Activated CD8-positive, alpha-beta memory T cell treated with anti-CD3 and anti-CD28 coated beads, Interleukin-2, amount 10 ng/mL, durations not matched to agents 7 days and 5 days (primary cell): ENCODE measurements at regions of chr1 and their contacts with region 1.

Region 1: GRCh38 chr1:10430216-10431069 is at the start of gene CENPS:
- DNase-seq: peak; percentile 94
- ATAC-seq: peak; percentile 89
- H3K4me3 Mint-ChIP-seq: peak within 1 kb of the TSS; percentile 87
- H3K27ac Mint-ChIP-seq: peak within 1 kb of the TSS; percentile 93
- H3K4me1 Mint-ChIP-seq: peaks cover 37% of the 10 kb centered on the region
- H3K27me3 Mint-ChIP-seq: no peaks in the 10 kb centered on the region
- total RNA-seq, gene CENPS: 14.8 to 18.6 TPM

Region 2: DNA sequence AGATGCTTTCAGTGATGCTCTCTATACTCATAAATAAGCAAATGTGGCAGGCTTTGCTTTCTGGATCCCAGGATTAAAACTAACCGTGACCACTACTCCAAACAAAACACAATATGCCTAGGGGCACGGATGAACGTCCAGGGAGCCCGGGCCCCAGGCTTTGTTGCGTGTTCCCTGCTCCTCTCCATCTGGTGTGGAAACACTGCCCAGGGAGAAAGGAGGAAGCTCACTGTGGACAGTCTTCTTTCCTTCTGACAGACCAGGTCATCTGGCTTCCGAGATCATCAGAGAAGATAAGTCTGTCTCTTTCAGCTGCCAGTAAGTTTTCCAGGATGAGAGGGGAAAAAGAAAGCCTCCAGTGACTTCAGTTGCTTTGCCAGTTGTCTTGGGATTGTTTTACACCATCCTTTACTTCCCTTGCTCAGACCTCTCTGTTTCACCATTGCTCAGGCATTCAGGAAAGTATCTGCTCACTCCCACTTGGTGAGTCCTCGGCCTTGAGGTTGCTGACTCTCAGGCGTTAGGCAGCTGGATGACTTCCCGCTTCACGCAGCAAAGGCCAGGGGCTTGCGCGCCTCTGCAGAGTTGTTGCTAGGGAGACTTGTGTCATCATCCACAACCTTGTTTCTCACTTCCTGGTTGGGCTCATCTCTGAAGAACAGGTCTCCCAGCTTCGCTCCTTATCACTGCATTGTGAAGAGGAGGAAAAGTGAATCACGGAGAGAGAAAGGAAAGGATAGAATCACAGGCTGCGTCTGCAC is 52.2 kb before region 1 on chr1:
- CTCF ChIA-PET with region 1: interaction called, 23 read pairs
- DNase-seq: no peak
- ATAC-seq: no peak
- H3K4me3 Mint-ChIP-seq: no peak overlapping the region
- H3K27ac Mint-ChIP-seq: no peak overlapping the region
- H3K4me1 Mint-ChIP-seq: no peaks in the 10 kb centered on the region
- H3K27me3 Mint-ChIP-seq: no peaks in the 10 kb centered on the region

Region 3: GRCh38 chr1:10398734-10399623 is 31.5 kb before region 1 on chr1 and contains the start of gene PGD:
- CTCF ChIA-PET with region 1: interaction called, 20 read pairs
- DNase-seq: peak; percentile 99
- ATAC-seq: peak; percentile 98
- H3K4me3 Mint-ChIP-seq: peak within 1 kb of the TSS; percentile 84
- H3K27ac Mint-ChIP-seq: peak within 1 kb of the TSS; percentile 78
- H3K4me1 Mint-ChIP-seq: peaks cover 31% of the 10 kb centered on the region
- H3K27me3 Mint-ChIP-seq: no peaks in the 10 kb centered on the region
- total RNA-seq, gene PGD: 74.9 to 128 TPM

Region 4: DNA sequence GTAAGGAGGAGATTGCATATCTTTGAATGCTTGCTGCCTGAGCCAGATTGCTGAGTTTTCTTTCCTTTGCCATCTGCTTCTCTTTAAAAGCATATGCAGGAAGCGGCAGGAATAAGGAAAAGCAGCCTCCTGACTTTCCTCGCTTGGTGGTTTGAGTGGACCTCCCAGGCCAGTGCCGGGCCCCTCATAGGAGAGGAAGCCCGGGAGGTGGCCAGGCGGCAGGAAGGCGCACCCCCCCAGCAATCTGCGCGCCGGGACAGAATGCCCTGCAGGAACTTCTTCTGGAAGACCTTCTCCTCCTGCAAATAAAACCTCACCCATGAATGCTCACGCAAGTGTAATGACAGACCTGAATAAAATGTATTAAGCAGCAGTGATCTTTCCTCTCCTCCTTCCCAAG is 20.8 kb after region 1 on chr1:
- CTCF ChIA-PET with region 1: interaction called, 15 read pairs
- DNase-seq: no peak
- ATAC-seq: no peak
- H3K4me3 Mint-ChIP-seq: no peak overlapping the region
- H3K27ac Mint-ChIP-seq: no peak overlapping the region
- H3K4me1 Mint-ChIP-seq: peaks cover 2% of the 10 kb centered on the region
- H3K27me3 Mint-ChIP-seq: no peaks in the 10 kb centered on the region

Region 5: DNA sequence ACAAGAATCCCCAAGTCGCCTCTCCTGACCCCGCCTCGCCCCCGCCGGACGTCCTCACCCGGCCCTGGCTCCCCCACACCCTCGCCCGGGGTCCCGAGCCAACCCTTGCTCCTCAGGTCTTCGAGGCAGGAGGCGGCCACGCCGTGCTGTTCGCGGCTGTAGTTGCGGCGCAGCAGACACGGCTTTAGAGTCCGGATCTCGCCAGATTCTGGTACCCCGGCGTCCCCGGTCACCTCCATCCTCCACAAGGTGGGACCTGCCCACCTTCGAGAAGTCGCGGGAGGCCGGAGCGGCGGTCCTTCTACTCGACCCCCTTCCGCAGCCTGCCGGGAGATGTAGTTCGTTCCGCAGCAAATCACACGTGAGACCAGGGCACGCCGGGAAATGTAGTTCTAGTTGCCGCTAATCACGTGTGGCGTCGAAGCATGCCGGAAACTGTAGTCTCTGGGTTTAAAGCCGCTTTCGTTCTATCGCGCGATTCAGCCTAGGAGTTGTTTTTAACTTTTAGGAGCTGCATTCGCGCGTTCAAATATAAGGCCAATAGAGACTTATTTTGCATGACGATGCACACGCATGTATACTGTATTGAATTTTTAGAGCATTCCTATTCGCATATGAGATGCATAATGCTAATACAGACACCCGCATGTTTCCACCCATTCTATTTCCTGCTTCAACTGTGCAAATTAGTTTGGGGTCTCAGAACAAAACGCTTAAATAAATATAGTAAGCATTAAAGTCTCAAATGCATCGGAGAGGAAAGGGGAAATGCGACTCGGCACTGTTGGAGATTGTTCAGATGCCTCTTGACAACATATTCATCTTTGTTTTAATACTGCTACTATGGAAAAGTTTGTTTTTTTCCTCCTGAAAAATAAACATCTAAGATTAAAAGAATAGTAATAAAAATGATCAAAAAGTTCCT is 42.0 kb after region 1 on chr1 and contains the start of gene DFFA:
- CTCF ChIA-PET with region 1: interaction called, 12 read pairs
- DNase-seq: peak; percentile 97
- ATAC-seq: peak; percentile 82
- H3K4me3 Mint-ChIP-seq: peak within 1 kb of the TSS; percentile 97
- H3K27ac Mint-ChIP-seq: peak within 1 kb of the TSS; percentile 92
- H3K4me1 Mint-ChIP-seq: peaks cover 45% of the 10 kb centered on the region
- H3K27me3 Mint-ChIP-seq: no peaks in the 10 kb centered on the region
- total RNA-seq, gene DFFA: 40.9 to 45.1 TPM